ENCODE measurements at regions of chr7 and their contacts with region 1.

Region 1: DNA sequence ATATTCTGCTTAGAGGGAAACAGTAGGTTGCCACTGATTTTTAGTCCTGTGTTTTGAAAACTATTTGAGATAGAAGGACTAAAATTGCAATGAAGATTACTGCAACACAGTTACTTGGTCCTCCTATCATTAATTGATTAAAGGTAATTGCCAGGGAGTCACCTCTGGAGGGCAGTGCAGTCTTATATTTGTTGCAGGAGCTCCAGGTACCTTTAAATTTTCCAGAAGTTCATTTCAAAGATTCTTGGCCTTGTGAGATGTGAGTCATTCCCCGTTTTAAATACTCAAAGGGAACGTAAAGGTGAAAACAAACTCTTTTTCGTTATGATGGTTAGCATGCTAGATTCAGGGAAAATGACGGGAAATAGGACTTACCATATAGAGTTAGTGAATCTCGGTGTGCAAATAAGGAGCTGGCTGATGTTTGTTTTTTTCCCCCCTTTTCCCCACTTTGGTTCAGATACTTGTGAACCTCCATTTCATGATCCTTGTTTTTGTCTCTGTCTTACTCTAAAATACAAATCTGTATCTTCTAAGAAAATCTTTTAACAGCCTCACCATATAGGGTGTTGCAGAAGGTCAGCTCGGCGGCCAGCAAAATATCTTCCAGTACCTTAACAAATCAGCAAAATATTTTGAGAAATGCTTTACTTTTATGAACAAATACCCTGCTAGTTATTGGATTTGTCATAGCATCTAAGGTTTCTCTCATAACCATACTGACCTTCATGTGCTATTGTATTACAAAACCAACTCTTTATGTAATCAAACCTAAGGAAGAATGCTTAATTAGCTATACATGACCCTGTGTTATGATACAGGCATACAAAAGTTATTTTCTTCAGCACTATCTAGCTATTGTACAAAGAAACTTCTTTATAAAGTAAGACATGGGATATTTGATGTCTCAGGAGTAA is 143.0 kb upstream of the HDAC9 start:
- DNase-seq: peak in 1 of 2 experiments; percentile 54
- H3K4me3 ChIP-seq: no peak overlapping the region
- H3K27ac ChIP-seq: no peak overlapping the region
- H3K4me1 ChIP-seq: no peaks in the 10 kb centered on the region; a peak in 1 of 7 replicates
- H3K27me3 ChIP-seq: no peaks in the 10 kb centered on the region
- CTCF ChIP-seq: peak in 2 of 3 experiments; percentile 61 to 72; a peak in 3 of 4 replicates
- EP300 ChIP-seq: no peak
- POLR2A ChIP-seq: no peak
- RAD21 ChIP-seq: peak; percentile 93 to 95

Region 2: GRCh38 chr7:17725796-17726195 is 626.8 kb before region 1 on chr7:
- CTCF ChIA-PET with region 1: no interaction called
- POLR2A ChIA-PET with region 1: no interaction called
- DNase-seq: no peak
- H3K4me3 ChIP-seq: no peak overlapping the region
- H3K27ac ChIP-seq: no peak overlapping the region
- H3K4me1 ChIP-seq: no peaks in the 10 kb centered on the region; a peak in 1 of 7 replicates
- H3K27me3 ChIP-seq: no peaks in the 10 kb centered on the region
- CTCF ChIP-seq: no peak
- EP300 ChIP-seq: no peak
- POLR2A ChIP-seq: no peak
- RAD21 ChIP-seq: no peak

Region 3: DNA sequence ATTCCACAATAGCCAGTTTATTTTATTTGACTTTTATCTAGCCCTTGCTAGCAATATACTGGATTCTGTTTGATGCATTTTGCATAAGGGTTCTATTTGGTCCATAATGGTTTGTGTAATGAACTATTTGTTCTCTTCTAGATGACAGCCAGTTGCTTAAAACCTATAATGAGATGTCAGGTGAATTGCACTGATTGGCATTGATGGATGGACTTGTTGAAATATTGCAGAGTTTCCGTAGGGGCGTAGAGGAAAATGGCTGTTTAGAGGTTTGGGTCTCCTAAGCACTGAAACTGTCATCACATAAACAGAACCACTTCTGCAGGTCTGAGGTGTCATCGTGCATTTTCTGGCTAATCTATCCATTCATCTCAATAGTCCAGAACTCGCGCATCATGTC is 18.0 kb after region 1 on chr7:
- CTCF ChIA-PET with region 1: interaction called, 28 read pairs
- POLR2A ChIA-PET with region 1: no interaction called
- DNase-seq: no peak
- H3K4me3 ChIP-seq: no peak overlapping the region
- H3K27ac ChIP-seq: no peak overlapping the region
- H3K4me1 ChIP-seq: no peaks in the 10 kb centered on the region; a peak in 1 of 7 replicates
- H3K27me3 ChIP-seq: no peaks in the 10 kb centered on the region
- CTCF ChIP-seq: no peak
- EP300 ChIP-seq: no peak
- POLR2A ChIP-seq: no peak
- RAD21 ChIP-seq: no peak

Region 4: GRCh38 chr7:18495412-18496340 is 143.1 kb after region 1 on chr7 and contains the start of gene HDAC9:
- CTCF ChIA-PET with region 1: interaction called, 26 read pairs
- POLR2A ChIA-PET with region 1: interaction called, 4 read pairs
- DNase-seq: peak in 1 of 2 experiments; percentile 57
- H3K4me3 ChIP-seq: peak within 1 kb of the TSS; percentile 32 to 68 (median 46)
- H3K27ac ChIP-seq: peak within 1 kb of the TSS; percentile 64; the same call in 1 of the 2 replicates
- H3K4me1 ChIP-seq: peaks cover 2 to 10% (median 9%) of the 10 kb centered on the region in 4 experiments; a peak in 4 of 7 replicates
- H3K27me3 ChIP-seq: no peaks in the 10 kb centered on the region
- CTCF ChIP-seq: no peak
- EP300 ChIP-seq: no peak
- POLR2A ChIP-seq: peak; percentile 86 to 97
- RAD21 ChIP-seq: no peak
- total RNA-seq, gene HDAC9: 9.4 and 13.1 TPM in 2 replicates

Region 5: GRCh38 chr7:18515067-18515466 is 162.5 kb after region 1 on chr7:
- CTCF ChIA-PET with region 1: interaction called, 58 read pairs
- POLR2A ChIA-PET with region 1: no interaction called
- DNase-seq: no peak
- H3K4me3 ChIP-seq: peak overlapping the region in 1 of 4 experiments; percentile 16; a peak in 1 of 8 replicates
- H3K27ac ChIP-seq: no peak overlapping the region
- H3K4me1 ChIP-seq: peaks cover 0 to 7% (median 4%) of the 10 kb centered on the region in 4 experiments; a peak in 4 of 7 replicates
- H3K27me3 ChIP-seq: no peaks in the 10 kb centered on the region
- CTCF ChIP-seq: no peak
- EP300 ChIP-seq: no peak
- POLR2A ChIP-seq: no peak
- RAD21 ChIP-seq: no peak

Region 6: DNA sequence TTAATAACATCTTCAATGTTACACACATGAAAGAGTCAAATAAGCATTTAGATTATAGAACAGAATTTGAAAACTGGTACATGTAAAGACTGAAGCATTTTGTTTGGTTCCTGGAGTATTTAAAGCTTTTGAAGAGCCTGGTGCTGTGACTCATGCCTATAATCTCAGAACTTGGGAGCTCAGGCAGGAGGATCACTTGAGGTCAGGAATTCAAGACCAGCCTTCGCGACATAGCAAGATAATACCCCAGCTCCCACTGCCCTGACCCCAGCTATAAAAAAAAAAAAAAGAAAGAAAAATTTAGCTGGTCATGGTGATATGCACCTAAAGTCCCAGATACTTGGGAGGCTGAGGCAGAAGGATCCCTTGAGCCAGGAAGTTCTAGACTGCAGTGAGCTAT is 230.7 kb after region 1 on chr7:
- CTCF ChIA-PET with region 1: interaction called, 94 read pairs
- POLR2A ChIA-PET with region 1: no interaction called
- DNase-seq: no peak
- H3K4me3 ChIP-seq: no peak overlapping the region
- H3K27ac ChIP-seq: no peak overlapping the region; the same call in 1 of the 2 replicates
- H3K4me1 ChIP-seq: no peaks in the 10 kb centered on the region
- H3K27me3 ChIP-seq: peaks cover 0 to 1% (median 0%) of the 10 kb centered on the region in 4 experiments; a peak in 1 of 7 replicates
- CTCF ChIP-seq: no peak
- EP300 ChIP-seq: no peak
- POLR2A ChIP-seq: no peak
- RAD21 ChIP-seq: no peak

Region 7: DNA sequence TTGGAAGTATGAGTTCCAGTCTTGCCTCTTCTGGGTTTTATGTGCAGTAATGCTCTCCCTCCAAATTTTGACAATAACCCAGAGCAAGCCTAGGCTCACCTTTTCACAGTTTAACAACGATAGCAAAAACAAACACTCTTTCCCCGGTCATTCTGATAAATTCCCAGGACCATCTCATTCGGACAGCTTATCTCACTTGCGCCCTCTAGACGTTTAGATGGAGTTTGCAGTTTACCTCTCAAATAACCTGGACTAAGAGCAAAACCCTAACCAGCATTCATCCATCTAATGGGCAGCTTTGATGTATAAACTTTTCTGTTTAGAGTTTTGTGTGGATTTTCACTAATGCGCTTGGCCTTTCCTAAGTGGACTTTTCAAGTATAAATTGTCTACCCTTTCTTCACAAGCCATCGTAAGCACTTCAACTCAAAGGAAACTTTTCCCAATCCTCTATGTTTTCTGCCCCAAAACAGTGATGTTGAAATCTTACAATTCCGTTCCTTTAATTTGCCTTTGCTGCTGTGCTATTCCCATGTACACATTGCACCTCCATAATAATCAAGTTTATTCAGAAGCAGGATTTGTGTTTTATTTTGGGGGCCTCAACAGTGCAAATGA is 257.8 kb after region 1 on chr7:
- CTCF ChIA-PET with region 1: interaction called, 28 read pairs
- POLR2A ChIA-PET with region 1: no interaction called
- DNase-seq: peak; percentile 3 to 55
- H3K4me3 ChIP-seq: no peak overlapping the region
- H3K27ac ChIP-seq: no peak overlapping the region
- H3K4me1 ChIP-seq: no peaks in the 10 kb centered on the region; a peak in 1 of 7 replicates
- H3K27me3 ChIP-seq: no peaks in the 10 kb centered on the region
- CTCF ChIP-seq: peak in 2 of 3 experiments; percentile 61 to 86; a peak in 2 of 4 replicates
- EP300 ChIP-seq: no peak
- POLR2A ChIP-seq: no peak
- RAD21 ChIP-seq: peak; percentile 57 to 70

Measured in H1 (cell line).